Activated CD4-positive, alpha-beta memory T cell treated with anti-CD3 and anti-CD28 coated beads for 36 hours (primary cell): ENCODE measurements at regions of chr2 and their contacts with region 1.

Region 1: DNA sequence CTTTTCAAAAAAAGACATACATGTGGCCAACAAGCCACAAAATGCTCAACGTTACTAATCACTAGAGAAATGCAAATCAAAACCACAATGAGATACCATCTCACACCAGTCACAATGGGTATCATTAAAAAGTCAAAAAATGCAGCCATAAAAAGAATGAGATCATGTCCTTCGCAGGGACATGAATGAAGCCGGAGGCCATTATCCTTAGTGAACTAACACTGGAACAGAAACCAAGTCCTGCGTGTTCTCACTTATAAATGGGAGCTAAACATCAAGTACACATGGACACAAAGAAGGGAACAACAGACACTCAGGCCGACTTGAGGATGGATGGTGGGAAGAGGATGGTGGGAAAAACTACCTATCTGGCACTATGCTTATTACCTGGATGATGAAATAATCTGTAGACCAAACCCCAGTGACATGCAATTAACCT is 17.8 kb upstream of the ATL2 start:
- DNase-seq: no peak
- H3K4me3 Mint-ChIP-seq: no peak overlapping the region
- H3K27ac Mint-ChIP-seq: no peak overlapping the region
- H3K4me1 Mint-ChIP-seq: peaks cover 9% of the 10 kb centered on the region
- H3K27me3 Mint-ChIP-seq: peaks cover 15% of the 10 kb centered on the region

Region 2: GRCh38 chr2:38323623-38324022 is 71.3 kb before region 1 on chr2:
- CTCF ChIA-PET with region 1: no interaction called
- POLR2A ChIA-PET with region 1: no interaction called
- intact Hi-C with region 1: no loop called
- DNase-seq: no peak
- H3K4me3 Mint-ChIP-seq: no peak overlapping the region
- H3K27ac Mint-ChIP-seq: no peak overlapping the region
- H3K4me1 Mint-ChIP-seq: peaks cover 24% of the 10 kb centered on the region
- H3K27me3 Mint-ChIP-seq: no peaks in the 10 kb centered on the region

Region 3: DNA sequence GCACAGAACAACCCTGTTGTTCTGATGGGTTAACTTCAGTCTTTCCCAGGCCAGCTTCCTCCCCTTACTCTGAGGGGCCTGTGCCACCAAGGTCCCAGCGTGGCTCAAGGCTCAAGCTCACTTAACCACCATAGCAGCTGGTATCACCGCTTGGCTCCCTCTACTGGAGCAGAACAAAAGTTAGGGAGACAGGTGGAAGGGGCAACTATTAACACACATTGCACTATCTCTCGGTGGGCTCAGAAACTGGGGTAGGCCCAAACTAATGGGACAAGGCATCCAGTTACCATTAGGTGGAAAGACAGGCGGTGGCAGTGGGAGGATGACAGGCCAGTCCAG is 70.8 kb after region 1 on chr2:
- CTCF ChIA-PET with region 1: no interaction called
- POLR2A ChIA-PET with region 1: no interaction called
- intact Hi-C with region 1: loop called (anchors 2 kb)
- DNase-seq: peak; percentile 23
- H3K4me3 Mint-ChIP-seq: no peak overlapping the region
- H3K27ac Mint-ChIP-seq: no peak overlapping the region
- H3K4me1 Mint-ChIP-seq: peaks cover 9% of the 10 kb centered on the region
- H3K27me3 Mint-ChIP-seq: peaks cover 6% of the 10 kb centered on the region